ENCODE measurements at regions of chr11 and their contacts with region 1.

Region 1: GRCh38 chr11:118791111-118791965 is at the start of gene DDX6:
- DNase-seq: no peak
- ATAC-seq: peak; percentile 84
- H3K4me3 ChIP-seq: peak within 1 kb of the TSS; percentile 77 to 91
- H3K27ac ChIP-seq: peak within 1 kb of the TSS; percentile 99
- H3K4me1 ChIP-seq: peaks cover 24% of the 10 kb centered on the region
- H3K27me3 ChIP-seq: no peaks in the 10 kb centered on the region
- CTCF ChIP-seq: no peak; the same call in 1 of the 2 replicates
- total RNA-seq, gene DDX6: 155 TPM

Region 2: DNA sequence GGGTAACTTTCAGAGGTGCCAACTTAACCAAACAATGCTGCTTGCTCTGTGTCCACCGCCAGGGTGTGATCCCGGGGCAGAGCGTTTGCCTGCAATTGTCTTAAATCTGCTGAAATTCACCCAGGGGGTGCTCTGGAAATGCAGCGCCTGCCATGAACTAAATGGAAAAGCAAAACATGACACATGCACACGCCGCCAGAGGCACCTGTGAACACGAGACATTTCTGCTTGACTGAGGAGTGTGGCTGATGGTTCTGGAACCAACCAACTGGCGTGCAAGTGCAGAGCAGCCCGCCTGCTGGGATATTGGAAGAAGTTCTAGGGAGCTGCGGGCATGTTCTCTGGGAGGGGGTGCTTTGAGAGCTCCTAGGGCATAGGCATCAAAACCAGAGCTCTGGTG is 1024.8 kb before region 1 on chr11:
- CTCF ChIA-PET with region 1: no interaction called
- POLR2A ChIA-PET with region 1: no interaction called
- in situ Hi-C with region 1: no loop called
- intact Hi-C with region 1: no loop called
- DNase-seq: no peak
- ATAC-seq: no peak
- H3K4me3 ChIP-seq: no peak overlapping the region
- H3K27ac ChIP-seq: no peak overlapping the region
- H3K4me1 ChIP-seq: no peaks in the 10 kb centered on the region
- H3K27me3 ChIP-seq: no peaks in the 10 kb centered on the region
- CTCF ChIP-seq: no peak

Region 3: DNA sequence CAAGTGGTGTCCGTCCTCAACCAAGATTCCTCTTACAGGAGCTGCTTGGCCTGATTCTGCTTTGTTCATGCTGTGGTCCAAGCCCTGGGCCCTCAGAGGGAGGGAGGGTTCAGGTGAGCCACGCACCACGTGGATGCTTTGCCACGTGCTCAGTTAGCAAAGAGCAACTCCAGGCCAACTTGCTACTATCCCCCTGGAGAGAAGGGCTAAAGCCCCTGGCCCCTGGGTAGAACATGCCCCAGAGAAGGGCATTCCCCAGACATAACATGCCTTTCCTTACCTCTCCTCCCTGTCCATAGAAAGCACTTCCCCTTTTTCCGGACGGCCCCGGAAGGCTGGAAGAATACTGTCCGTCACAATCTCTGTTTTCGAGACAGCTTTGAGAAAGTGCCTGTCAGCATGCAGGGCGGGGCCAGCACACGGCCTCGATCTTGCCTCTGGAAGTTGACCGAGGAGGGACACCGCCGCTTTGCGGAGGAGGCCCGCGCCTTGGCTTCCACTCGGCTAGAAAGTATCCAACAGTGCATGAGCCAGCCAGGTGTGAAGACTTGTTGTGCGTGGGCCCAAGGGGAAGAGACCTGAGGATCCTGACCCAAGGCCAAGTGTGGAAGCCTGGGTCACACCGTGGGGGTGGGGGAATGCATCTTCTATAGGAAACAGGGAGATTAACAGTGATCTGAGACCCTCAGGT is 189.0 kb after region 1 on chr11:
- CTCF ChIA-PET with region 1: no interaction called
- POLR2A ChIA-PET with region 1: no interaction called
- in situ Hi-C with region 1: no loop called
- intact Hi-C with region 1: no loop called
- DNase-seq: no peak
- ATAC-seq: peak; percentile 35; the same call in 1 of the 2 replicates
- H3K4me3 ChIP-seq: no peak overlapping the region
- H3K27ac ChIP-seq: no peak overlapping the region
- H3K4me1 ChIP-seq: no peaks in the 10 kb centered on the region
- H3K27me3 ChIP-seq: no peaks in the 10 kb centered on the region
- CTCF ChIP-seq: no peak

Region 4: DNA sequence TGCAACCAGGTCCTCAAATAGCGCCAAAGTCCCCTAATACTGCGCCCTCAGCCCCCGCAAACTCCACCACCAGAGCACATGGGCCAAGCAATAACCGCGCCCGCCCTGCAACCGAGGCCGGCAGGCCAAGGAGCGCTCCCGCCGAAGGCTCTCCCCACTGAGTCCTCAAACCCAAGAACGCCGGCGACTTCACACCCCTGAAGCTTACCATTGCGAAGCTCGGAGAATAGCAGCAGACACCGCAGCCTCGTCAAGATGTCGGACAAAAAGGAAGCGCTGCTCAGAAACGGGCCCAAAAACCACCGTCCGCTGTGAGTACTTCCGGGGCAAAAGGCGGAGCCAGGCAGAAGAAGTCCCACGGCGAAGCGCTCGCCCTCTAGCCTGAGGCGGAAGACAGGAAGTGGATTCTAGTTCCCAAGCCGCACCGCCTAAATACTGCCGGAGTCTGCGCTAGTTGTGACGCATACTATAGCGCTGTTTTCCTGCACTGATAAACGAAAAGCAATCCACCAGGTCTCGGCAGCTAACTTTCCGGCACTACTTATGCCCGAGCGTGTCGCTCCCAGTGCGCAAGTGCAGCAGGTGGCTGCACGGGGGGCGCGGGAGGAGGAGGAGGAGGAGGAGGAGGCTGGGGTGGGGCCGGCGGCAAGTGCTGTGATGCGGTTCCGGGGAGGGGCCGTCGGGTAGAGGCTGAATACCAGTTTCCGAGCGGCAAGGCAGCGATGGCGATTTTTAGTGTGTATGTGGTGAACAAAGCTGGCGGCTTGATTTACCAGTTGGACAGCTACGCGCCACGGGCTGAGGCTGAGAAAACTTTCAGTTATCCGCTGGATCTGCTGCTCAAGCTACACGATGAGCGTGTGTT is 227.0 kb after region 1 on chr11 and contains the starts of genes RPS25 and TRAPPC4:
- CTCF ChIA-PET with region 1: no interaction called
- POLR2A ChIA-PET with region 1: no interaction called
- in situ Hi-C with region 1: loop called (anchors 5 kb)
- intact Hi-C with region 1: no loop called
- DNase-seq: peak; percentile 95
- ATAC-seq: peak; percentile 93
- H3K4me3 ChIP-seq: peak within 1 kb of the TSS; percentile 67 to 85
- H3K27ac ChIP-seq: peak within 1 kb of the TSS; percentile 99
- H3K4me1 ChIP-seq: peaks cover 31% of the 10 kb centered on the region
- H3K27me3 ChIP-seq: no peaks in the 10 kb centered on the region
- CTCF ChIP-seq: no peak
- total RNA-seq, gene RPS25: 1,083 TPM
- total RNA-seq, gene TRAPPC4: 78.9 TPM

Region 5: DNA sequence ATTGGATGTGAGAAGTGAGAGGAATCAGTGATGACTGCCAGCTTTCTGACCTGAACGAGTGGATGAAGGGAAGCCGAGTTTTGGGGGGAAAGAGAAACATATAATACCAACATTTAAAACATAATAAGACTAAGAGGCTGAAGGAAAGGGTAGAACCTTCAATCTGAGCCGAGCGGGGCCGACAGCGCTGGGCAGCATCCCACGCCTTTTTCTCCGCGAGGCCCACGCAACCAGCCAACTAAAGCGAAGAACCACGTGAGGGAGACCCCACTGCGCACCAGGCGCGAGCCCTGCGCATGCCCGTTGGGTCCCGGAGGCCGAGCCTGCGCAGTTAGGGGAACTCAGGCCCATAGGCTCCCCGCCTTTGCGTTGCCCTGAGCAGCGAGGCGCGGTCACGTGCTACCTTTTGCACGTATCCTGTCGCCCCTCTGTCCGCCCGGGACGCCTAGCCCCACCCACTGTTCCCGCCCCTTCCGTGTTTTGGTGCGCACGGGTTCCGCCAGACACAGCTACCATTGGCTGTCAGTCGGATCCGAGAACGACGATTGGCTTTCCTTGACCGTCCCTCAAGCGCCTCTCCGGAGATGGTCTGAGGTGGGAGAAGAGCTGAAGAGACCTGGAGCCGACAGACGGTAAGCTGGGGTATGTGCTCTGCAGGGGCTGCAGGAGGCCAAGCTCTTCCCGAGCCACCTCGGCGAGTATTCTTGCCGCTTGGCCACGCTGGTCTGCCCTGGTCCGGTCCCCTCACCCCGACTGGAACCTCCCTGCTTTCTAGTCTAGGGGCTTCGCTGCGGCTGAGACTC is 329.9 kb after region 1 on chr11 and contains the start of gene HINFP:
- CTCF ChIA-PET with region 1: no interaction called
- POLR2A ChIA-PET with region 1: no interaction called
- in situ Hi-C with region 1: no loop called
- intact Hi-C with region 1: no loop called
- DNase-seq: peak; percentile 94
- ATAC-seq: peak; percentile 99
- H3K4me3 ChIP-seq: peak within 1 kb of the TSS; percentile 79 to 87
- H3K27ac ChIP-seq: peak within 1 kb of the TSS; percentile 96
- H3K4me1 ChIP-seq: peaks cover 12% of the 10 kb centered on the region
- H3K27me3 ChIP-seq: no peaks in the 10 kb centered on the region
- CTCF ChIP-seq: no peak
- total RNA-seq, gene HINFP: 52.7 TPM

Region 6: GRCh38 chr11:120324932-120325810 is 1533.8 kb after region 1 on chr11 and contains the start of gene TLCD5:
- CTCF ChIA-PET with region 1: no interaction called
- POLR2A ChIA-PET with region 1: interaction called, 17 read pairs
- in situ Hi-C with region 1: no loop called
- intact Hi-C with region 1: no loop called
- DNase-seq: no peak
- ATAC-seq: peak; percentile 93
- H3K4me3 ChIP-seq: peak within 1 kb of the TSS; percentile 70 to 76
- H3K27ac ChIP-seq: peak within 1 kb of the TSS; percentile 99
- H3K4me1 ChIP-seq: peaks cover 35% of the 10 kb centered on the region
- H3K27me3 ChIP-seq: no peaks in the 10 kb centered on the region
- CTCF ChIP-seq: peak; percentile 65
- total RNA-seq, gene TLCD5: 22.8 TPM

Measured in Panc1 (cell line).